OCI-LY7 (cell line): ENCODE measurements at regions of chr18 and their contacts with region 1.

Region 1: GRCh38 chr18:73842795-73843394 is 304.7 kb downstream of the FBXO15 start:
- DNase-seq: peak; percentile 45
- H3K4me3 ChIP-seq: no peak overlapping the region
- H3K27ac ChIP-seq: no peak overlapping the region
- H3K4me1 ChIP-seq: no peaks in the 10 kb centered on the region
- CTCF ChIP-seq: peak; percentile 81

Region 2: GRCh38 chr18:72762515-72763122 is 1080.3 kb before region 1 on chr18:
- CTCF ChIA-PET with region 1: no interaction called
- POLR2A ChIA-PET with region 1: no interaction called
- intact Hi-C with region 1: loop called (anchors 5 kb)
- DNase-seq: peak; percentile 30
- H3K4me3 ChIP-seq: no peak overlapping the region
- H3K27ac ChIP-seq: no peak overlapping the region
- H3K4me1 ChIP-seq: no peaks in the 10 kb centered on the region
- CTCF ChIP-seq: peak; percentile 75